ENCODE measurements at regions of chr14 and their contacts with region 1.

Region 1: DNA sequence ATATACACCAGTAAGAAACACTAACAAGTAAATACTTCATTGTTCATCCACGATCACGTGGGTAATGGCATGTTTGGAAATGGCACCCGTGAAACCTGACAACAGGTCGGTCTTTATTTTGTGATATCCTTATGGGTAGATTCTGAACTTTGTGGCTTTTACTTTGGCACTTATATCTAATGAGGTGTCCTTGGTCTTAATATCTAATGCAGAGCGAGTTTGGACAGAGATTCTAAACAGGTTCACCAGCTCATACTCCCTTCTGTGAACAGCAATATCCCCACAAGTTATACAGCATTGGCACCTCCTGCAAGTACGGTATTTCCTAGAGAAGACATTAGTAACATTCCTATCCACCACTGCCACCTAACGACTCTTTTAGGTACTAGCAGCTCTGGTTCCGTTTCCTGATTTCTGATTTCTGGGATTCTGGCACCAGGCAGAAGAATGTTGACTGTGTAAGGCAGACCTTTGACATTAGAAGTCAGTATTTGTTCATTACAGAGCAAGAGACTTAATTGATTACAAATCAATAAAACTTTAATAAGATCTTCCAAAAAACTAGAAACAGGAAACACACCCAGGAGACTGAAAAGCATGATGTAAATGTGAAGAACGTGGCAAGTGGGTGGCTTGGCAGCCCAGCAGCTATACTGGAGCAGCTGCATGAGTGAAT is 2.4 kb downstream of the ANG start:
- DNase-seq: peak; percentile 39 to 79 (median 49)
- H3K4me3 ChIP-seq: no peak overlapping the region
- H3K27ac ChIP-seq: no peak overlapping the region
- H3K4me1 ChIP-seq: peaks cover 0 to 11% of the 10 kb centered on the region in 2 donors
- H3K27me3 ChIP-seq: no peaks in the 10 kb centered on the region
- CTCF ChIP-seq: peak; percentile 75 to 91 (median 88)
- POLR2A ChIP-seq: no peak

Region 2: GRCh38 chr14:20530771-20531571 is 160.0 kb before region 1 on chr14:
- intact Hi-C with region 1: loop called (anchors 5 to 10 kb)
- DNase-seq: peak; percentile 70 to 92 (median 85)
- H3K4me3 ChIP-seq: no peak overlapping the region
- H3K27ac ChIP-seq: no peak overlapping the region
- H3K4me1 ChIP-seq: no peaks in the 10 kb centered on the region
- H3K27me3 ChIP-seq: no peaks in the 10 kb centered on the region
- CTCF ChIP-seq: peak; percentile 49 to 72 (median 60)
- POLR2A ChIP-seq: no peak

Region 3: GRCh38 chr14:20970983-20971704 is 280.2 kb after region 1 on chr14:
- intact Hi-C with region 1: loop called in 1 of 2 experiments (anchors 10 kb)
- DNase-seq: peak; percentile 76 to 94 (median 89)
- H3K4me3 ChIP-seq: peak overlapping the region; percentile 2 to 63 (median 48)
- H3K27ac ChIP-seq: peak overlapping the region; percentile 19 to 94 (median 89)
- H3K4me1 ChIP-seq: peaks cover 22 to 25% of the 10 kb centered on the region in 2 donors
- H3K27me3 ChIP-seq: no peaks in the 10 kb centered on the region
- CTCF ChIP-seq: peak; percentile 77 to 98 (median 85)
- POLR2A ChIP-seq: no peak

Measured in adrenal gland (tissue), 19 donors.